ENCODE measurements at regions of chr6 and their contacts with region 1.

Region 1: DNA sequence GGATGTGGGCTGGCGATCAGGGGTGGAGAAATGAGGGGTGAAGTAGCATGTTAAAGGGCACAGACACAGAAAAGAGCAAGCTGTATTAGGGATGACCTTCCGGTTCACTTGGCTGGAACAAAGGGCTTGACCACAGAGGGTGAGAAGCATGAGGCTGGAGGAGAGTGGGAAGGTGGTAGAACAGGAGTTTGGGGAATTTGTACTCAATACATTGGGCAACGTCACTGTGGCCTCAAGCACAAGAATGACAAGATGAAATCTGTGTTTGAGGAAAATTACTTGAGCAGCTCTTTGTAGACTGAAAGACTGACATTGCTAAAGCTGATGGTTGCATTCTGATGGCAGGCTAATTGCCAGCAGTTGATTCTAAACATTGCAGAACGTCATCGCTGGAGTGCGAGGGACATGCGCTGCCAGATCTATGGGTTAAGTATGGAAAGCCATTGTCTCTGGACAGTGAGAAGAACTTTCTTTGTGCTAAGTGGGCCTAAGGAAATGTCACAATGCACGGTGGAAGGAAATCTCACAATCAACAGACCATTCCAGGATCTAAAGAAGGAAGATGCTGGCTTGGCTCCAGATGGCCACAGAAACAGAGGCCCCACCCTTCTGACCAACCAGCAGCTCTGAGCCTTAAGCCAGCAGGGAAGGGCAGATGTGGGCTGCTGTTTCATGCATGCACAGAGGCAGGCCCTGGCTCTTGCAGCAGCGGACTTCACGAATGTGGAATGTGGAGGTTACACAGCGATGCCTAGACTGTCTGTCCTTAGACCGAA is 156.1 kb downstream of the SOBP start:
- DNase-seq: no peak
- H3K4me3 Mint-ChIP-seq: no peak overlapping the region
- H3K27ac Mint-ChIP-seq: no peak overlapping the region
- H3K4me1 Mint-ChIP-seq: no peaks in the 10 kb centered on the region
- H3K27me3 Mint-ChIP-seq: peaks cover 26% of the 10 kb centered on the region

Region 2: DNA sequence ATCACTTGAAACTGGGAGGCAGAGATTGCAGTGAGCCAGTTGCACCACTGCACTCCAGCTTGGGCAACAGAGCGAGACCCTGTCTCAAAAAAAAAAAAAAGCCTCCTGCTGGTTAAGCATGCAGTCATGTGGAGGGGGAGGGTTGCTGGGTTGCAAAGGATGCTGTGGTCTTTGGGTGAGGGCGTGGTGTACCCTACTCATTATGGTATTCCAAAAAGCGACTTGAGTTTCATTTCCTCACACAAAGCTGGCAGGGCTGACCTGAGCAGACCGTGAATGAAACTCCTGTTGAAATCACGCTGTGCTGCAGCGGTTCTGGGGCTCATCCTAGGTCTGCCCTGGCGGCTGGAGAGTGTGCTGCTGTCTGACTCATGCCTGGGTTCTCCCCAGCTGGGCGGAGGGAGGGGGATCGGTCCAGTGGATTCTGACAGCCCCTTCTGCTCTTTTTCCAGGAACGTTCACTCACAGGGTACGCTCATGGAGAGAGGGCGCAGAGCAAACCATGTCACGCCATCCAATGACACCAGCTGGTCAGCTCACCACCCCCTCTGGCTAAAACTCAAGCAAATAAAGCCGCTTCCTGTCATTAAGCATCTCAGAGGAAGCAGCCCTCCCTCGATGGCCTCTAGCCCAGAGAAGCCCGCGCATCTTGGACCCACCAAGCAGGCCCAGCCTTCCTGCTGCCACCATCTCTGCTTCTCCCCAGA is 11.9 kb after region 1 on chr6:
- CTCF ChIA-PET with region 1: interaction called, 16 read pairs
- POLR2A ChIA-PET with region 1: no interaction called
- DNase-seq: peak; percentile 81
- H3K4me3 Mint-ChIP-seq: peak overlapping the region; percentile 68
- H3K27ac Mint-ChIP-seq: peak overlapping the region; percentile 97
- H3K4me1 Mint-ChIP-seq: peaks cover 50% of the 10 kb centered on the region
- H3K27me3 Mint-ChIP-seq: peaks cover 4% of the 10 kb centered on the region